B cell (primary cell): ENCODE measurements at regions of chr1 and their contacts with region 1.

Region 1: GRCh38 chr1:52665006-52665941 is 32.3 kb downstream of the SHISAL2A start:
- DNase-seq: no peak
- ATAC-seq: no peak
- H3K4me3 ChIP-seq: no peak overlapping the region
- H3K4me3 Mint-ChIP-seq: no peak overlapping the region
- H3K27ac ChIP-seq: peak overlapping the region in 1 of 2 donors; percentile 28
- H3K27ac Mint-ChIP-seq: peak overlapping the region; percentile 74
- H3K4me1 ChIP-seq: peaks cover 4 to 8% of the 10 kb centered on the region in 2 donors
- H3K4me1 Mint-ChIP-seq: peaks cover 21% of the 10 kb centered on the region
- H3K27me3 ChIP-seq: no peaks in the 10 kb centered on the region
- H3K27me3 Mint-ChIP-seq: no peaks in the 10 kb centered on the region
- CTCF ChIP-seq: no peak

Region 2: GRCh38 chr1:52601991-52602855 is 63.1 kb before region 1 on chr1 and contains the start of gene GPX7:
- CTCF ChIA-PET with region 1: interaction called, 8 read pairs
- POLR2A ChIA-PET with region 1: no interaction called
- intact Hi-C with region 1: loop called (anchors 5 kb)
- DNase-seq: peak; percentile 74
- ATAC-seq: peak; percentile 72
- H3K4me3 ChIP-seq: peak within 1 kb of the TSS; percentile 60 to 70 (median 65)
- H3K4me3 Mint-ChIP-seq: peak within 1 kb of the TSS; percentile 93
- H3K27ac ChIP-seq: peak within 1 kb of the TSS; percentile 42 to 76
- H3K27ac Mint-ChIP-seq: peak within 1 kb of the TSS; percentile 93
- H3K4me1 ChIP-seq: peaks cover 34 to 46% of the 10 kb centered on the region in 2 donors
- H3K4me1 Mint-ChIP-seq: peaks cover 50% of the 10 kb centered on the region
- H3K27me3 ChIP-seq: no peaks in the 10 kb centered on the region
- H3K27me3 Mint-ChIP-seq: no peaks in the 10 kb centered on the region
- CTCF ChIP-seq: no peak
- total RNA-seq, gene GPX7: 21.4 and 23.9 TPM in 2 replicates